Common myeloid progenitor, CD34-positive (primary cell): ENCODE measurements at regions of chr12 and their contacts with region 1.

Region 1: GRCh38 chr12:57280211-57281062 is 29.4 kb upstream of the STAC3 start:
- DNase-seq: peak; percentile 26 to 77 (median 68)
- H3K4me3 ChIP-seq: no peak overlapping the region
- H3K27ac ChIP-seq: peak overlapping the region in 1 of 2 experiments; percentile 49
- H3K4me1 ChIP-seq: peaks cover 0 to 9% (median 6%) of the 10 kb centered on the region in 4 experiments
- H3K27me3 ChIP-seq: no peaks in the 10 kb centered on the region

Region 2: DNA sequence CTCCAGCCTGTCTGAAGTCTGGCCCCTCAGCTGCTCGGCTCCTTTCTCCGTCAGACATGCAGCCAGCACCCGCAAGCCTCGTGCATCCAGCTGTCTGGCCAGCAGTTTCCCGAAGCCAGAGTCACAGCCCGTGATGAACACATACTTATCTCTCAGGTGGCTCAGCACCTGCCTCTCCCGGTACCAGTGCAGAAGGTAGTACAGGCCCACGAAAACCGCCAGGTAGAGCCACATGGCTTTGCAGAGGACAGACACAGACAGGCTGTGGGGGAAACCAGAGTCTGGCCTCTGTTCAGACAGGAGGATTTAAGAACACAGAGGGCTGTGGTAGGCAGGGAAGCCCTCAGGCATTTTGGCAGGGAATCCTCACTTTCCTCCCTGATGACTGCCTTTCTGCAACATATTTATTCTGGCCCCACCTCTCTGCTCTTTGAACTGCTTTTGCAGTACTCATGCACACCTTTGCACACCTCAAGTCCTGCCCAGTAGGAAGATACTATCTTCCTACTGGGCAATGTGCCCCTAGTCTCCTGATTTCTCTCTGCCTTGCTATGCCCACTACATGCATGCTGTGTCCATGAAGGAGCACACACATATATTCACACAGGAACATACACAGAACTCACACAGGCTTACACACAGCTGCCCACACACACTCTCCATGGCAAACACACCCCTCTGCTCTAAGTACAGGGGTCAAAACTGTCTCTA is 323.1 kb before region 1 on chr12 and contains the start of gene RDH16:
- CTCF ChIA-PET with region 1: no interaction called
- POLR2A ChIA-PET with region 1: no interaction called
- DNase-seq: no peak
- H3K4me3 ChIP-seq: no peak within 1 kb of the TSS
- H3K27ac ChIP-seq: no peak within 1 kb of the TSS
- H3K4me1 ChIP-seq: no peaks in the 10 kb centered on the region
- H3K27me3 ChIP-seq: no peaks in the 10 kb centered on the region

Region 3: DNA sequence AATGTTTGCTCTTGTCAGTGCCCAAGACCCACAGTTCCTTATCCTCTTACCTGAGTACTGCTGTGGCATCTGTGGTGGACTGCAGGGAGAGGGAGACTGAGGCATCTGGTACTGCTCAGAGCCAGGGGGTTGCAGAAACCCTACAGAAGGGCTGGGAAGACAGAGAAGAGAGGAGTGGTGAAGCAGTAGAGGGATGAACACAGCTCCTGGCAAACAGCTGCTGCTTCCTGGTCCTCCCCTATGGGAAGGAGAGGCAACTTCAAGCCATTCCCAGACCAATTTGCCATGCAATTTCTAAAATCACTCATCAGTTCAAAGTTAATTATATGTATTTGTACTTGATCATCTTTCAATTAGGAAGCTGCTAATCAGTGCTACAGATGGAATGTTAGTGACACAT is 13.8 kb before region 1 on chr12:
- CTCF ChIA-PET with region 1: interaction called, 17 read pairs
- POLR2A ChIA-PET with region 1: no interaction called
- DNase-seq: no peak
- H3K4me3 ChIP-seq: no peak overlapping the region
- H3K27ac ChIP-seq: no peak overlapping the region
- H3K4me1 ChIP-seq: peaks cover 0 to 15% (median 6%) of the 10 kb centered on the region in 4 experiments
- H3K27me3 ChIP-seq: no peaks in the 10 kb centered on the region

Region 4: GRCh38 chr12:57296291-57296690 is 15.9 kb after region 1 on chr12:
- CTCF ChIA-PET with region 1: interaction called, 10 read pairs
- POLR2A ChIA-PET with region 1: no interaction called
- DNase-seq: no peak
- H3K4me3 ChIP-seq: no peak overlapping the region
- H3K27ac ChIP-seq: no peak overlapping the region
- H3K4me1 ChIP-seq: no peaks in the 10 kb centered on the region
- H3K27me3 ChIP-seq: no peaks in the 10 kb centered on the region

Region 5: DNA sequence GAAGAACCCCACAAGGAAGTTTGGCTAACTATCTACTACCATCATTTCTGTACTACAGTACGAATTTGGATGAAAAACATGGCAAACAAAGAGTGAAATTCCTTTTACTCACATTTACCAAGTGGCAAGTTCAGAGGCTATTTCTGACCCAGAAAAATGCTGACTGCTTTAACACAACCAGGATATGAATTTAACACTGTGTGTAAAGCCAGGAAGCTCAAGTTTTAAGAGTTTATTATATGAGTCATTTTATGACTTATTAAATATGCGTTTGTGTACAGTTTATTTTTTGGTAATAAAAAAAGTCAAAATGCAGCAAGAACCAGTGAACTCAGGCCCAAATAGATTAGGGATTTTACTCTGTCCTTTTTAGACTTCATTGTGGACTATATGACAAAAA is 29.0 kb after region 1 on chr12:
- CTCF ChIA-PET with region 1: no interaction called
- POLR2A ChIA-PET with region 1: no interaction called
- DNase-seq: no peak
- H3K4me3 ChIP-seq: no peak overlapping the region
- H3K27ac ChIP-seq: no peak overlapping the region
- H3K4me1 ChIP-seq: no peaks in the 10 kb centered on the region
- H3K27me3 ChIP-seq: no peaks in the 10 kb centered on the region

Region 6: DNA sequence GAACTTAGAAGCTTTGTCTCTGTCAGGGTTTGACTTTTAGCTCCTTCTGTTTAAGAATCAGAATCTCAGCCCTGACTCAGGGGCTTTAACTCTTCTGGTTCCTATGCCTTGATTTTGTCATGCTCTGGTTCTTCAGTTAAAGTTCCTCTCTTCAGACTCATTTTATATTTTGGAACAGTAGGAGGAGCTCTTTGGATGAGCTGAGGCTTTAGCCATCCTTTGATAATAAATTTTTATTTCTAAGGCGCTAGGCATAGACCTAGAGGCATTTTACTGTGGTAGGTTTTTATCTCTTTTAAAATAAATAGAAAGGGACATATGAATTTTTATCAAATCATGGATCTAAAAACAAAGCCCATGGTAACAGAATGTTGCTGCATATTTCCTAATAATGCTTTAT is 712.6 kb after region 1 on chr12:
- CTCF ChIA-PET with region 1: no interaction called
- POLR2A ChIA-PET with region 1: no interaction called
- DNase-seq: no peak
- H3K4me3 ChIP-seq: no peak overlapping the region
- H3K27ac ChIP-seq: no peak overlapping the region
- H3K4me1 ChIP-seq: no peaks in the 10 kb centered on the region
- H3K27me3 ChIP-seq: peaks cover 0 to 3% (median 0%) of the 10 kb centered on the region in 5 experiments